ENCODE measurements at regions of chr17 and their contacts with region 1.

Region 1: GRCh38 chr17:76753061-76753961 is 15.4 kb downstream of the MFSD11 start:
- DNase-seq: peak; percentile 43
- ATAC-seq: peak; percentile 90
- H3K4me3 Mint-ChIP-seq: peak overlapping the region; percentile 82
- H3K27ac Mint-ChIP-seq: peak overlapping the region; percentile 97
- H3K4me1 Mint-ChIP-seq: peaks cover 23% of the 10 kb centered on the region
- H3K27me3 Mint-ChIP-seq: no peaks in the 10 kb centered on the region

Region 2: GRCh38 chr17:76612977-76613851 is 140.1 kb before region 1 on chr17:
- CTCF ChIA-PET with region 1: no interaction called
- POLR2A ChIA-PET with region 1: interaction called, 13 read pairs
- intact Hi-C with region 1: no loop called
- DNase-seq: no peak
- ATAC-seq: no peak
- H3K4me3 Mint-ChIP-seq: no peak overlapping the region
- H3K27ac Mint-ChIP-seq: no peak overlapping the region
- H3K4me1 Mint-ChIP-seq: no peaks in the 10 kb centered on the region
- H3K27me3 Mint-ChIP-seq: no peaks in the 10 kb centered on the region

Region 3: GRCh38 chr17:76714822-76715495 is 38.4 kb before region 1 on chr17:
- CTCF ChIA-PET with region 1: interaction called, 6 read pairs
- POLR2A ChIA-PET with region 1: interaction called, 4 read pairs
- intact Hi-C with region 1: loop called in 1 of 2 experiments (anchors 2 kb)
- DNase-seq: peak; percentile 87
- ATAC-seq: no peak
- H3K4me3 Mint-ChIP-seq: no peak overlapping the region
- H3K27ac Mint-ChIP-seq: peak overlapping the region; percentile 68
- H3K4me1 Mint-ChIP-seq: peaks cover 38% of the 10 kb centered on the region
- H3K27me3 Mint-ChIP-seq: no peaks in the 10 kb centered on the region

Region 4: GRCh38 chr17:76726231-76726775 is 27.0 kb before region 1 on chr17 and contains the start of gene JMJD6:
- CTCF ChIA-PET with region 1: interaction called, 4 read pairs
- POLR2A ChIA-PET with region 1: interaction called, 7 read pairs
- intact Hi-C with region 1: loop called in 1 of 2 experiments (anchors 1 kb)
- DNase-seq: peak; percentile 97
- ATAC-seq: peak; percentile 87
- H3K4me3 Mint-ChIP-seq: peak within 1 kb of the TSS; percentile 97
- H3K27ac Mint-ChIP-seq: peak within 1 kb of the TSS; percentile 98
- H3K4me1 Mint-ChIP-seq: peaks cover 54% of the 10 kb centered on the region
- H3K27me3 Mint-ChIP-seq: no peaks in the 10 kb centered on the region
- total RNA-seq, gene JMJD6: 51.3 to 65.5 TPM

Region 5: DNA sequence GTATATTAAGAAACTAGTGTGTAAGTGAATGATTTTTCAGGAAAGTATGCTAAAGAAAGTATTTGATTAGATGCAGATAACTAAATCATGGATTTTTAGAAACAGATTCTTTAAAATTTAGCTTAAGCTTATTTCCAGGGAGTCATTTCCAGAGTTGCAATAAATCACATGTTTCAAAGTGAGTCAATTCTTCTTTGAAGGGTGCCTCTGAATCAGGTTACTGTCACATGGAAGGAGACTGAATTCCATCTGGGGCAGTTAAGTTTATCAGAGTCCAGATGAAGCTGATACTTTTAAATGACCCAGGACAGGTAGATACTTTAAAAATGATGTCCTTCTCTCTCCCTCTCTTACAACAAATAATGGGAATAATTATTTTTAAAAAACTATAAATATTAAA is 10.4 kb before region 1 on chr17:
- CTCF ChIA-PET with region 1: interaction called, 5 read pairs
- POLR2A ChIA-PET with region 1: interaction called, 5 read pairs
- intact Hi-C with region 1: loop called (anchors 1 to 2 kb)
- DNase-seq: no peak
- ATAC-seq: peak; percentile 65
- H3K4me3 Mint-ChIP-seq: no peak overlapping the region
- H3K27ac Mint-ChIP-seq: no peak overlapping the region
- H3K4me1 Mint-ChIP-seq: peaks cover 32% of the 10 kb centered on the region
- H3K27me3 Mint-ChIP-seq: no peaks in the 10 kb centered on the region

Region 6: DNA sequence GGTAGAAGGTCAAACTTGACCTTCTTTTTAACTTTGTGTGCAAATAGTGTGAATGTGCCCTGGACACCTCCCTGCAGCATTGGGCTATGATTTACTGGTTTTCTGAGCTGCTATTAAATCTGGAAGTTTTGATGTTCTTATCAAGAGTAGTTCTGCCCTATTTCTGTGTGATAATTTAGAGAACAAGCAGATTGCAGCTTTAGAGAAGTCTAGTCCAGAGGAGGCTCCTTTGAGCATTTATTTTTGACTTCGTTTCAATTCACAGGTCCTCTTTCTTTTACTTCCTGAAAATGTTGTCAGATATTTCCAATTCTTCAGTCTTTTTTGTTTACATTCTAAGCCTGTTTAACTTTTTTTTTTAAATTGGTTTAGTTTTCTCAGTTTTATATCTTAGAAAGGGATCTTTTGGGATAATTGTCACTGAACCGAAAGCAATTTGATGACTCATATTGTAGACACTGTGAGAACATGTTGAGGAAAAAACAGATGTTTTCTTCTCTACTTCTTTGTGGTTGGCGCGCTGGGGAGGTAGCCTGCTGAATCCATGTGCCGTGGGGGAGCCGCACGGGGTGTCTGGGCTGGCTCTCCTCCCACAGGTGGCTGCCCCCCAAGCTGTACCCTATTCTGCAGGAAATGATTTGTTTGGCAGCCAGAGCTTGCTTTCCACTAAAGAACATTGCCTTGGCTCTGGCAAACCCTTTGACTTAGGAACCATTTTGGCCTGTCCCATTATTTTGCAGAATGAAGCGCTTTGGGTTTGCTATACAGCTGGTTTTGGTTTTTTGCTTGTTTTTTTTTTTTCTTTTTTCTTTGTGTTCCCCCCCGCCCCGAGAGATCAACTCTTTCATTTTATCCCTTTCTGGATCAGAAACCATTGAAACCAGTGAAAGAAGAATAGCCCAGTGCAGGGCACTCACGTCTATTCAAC is 38.0 kb after region 1 on chr17:
- CTCF ChIA-PET with region 1: no interaction called
- POLR2A ChIA-PET with region 1: no interaction called
- intact Hi-C with region 1: loop called in 1 of 2 experiments (anchors 1 kb)
- DNase-seq: peak; percentile 73
- ATAC-seq: peak; percentile 89
- H3K4me3 Mint-ChIP-seq: peak overlapping the region; percentile 12
- H3K27ac Mint-ChIP-seq: no peak overlapping the region
- H3K4me1 Mint-ChIP-seq: peaks cover 10% of the 10 kb centered on the region
- H3K27me3 Mint-ChIP-seq: no peaks in the 10 kb centered on the region

Region 7: GRCh38 chr17:76940738-76941350 is 187.5 kb after region 1 on chr17:
- CTCF ChIA-PET with region 1: no interaction called
- POLR2A ChIA-PET with region 1: no interaction called
- intact Hi-C with region 1: no loop called
- DNase-seq: peak; percentile 35
- ATAC-seq: no peak
- H3K4me3 Mint-ChIP-seq: no peak overlapping the region
- H3K27ac Mint-ChIP-seq: no peak overlapping the region
- H3K4me1 Mint-ChIP-seq: no peaks in the 10 kb centered on the region
- H3K27me3 Mint-ChIP-seq: no peaks in the 10 kb centered on the region

Region 8: GRCh38 chr17:77088455-77089123 is 335.3 kb after region 1 on chr17:
- CTCF ChIA-PET with region 1: no interaction called
- POLR2A ChIA-PET with region 1: no interaction called
- intact Hi-C with region 1: loop called in 1 of 2 experiments (anchors 1 kb)
- DNase-seq: peak; percentile 89
- ATAC-seq: peak; percentile 83
- H3K4me3 Mint-ChIP-seq: peak overlapping the region; percentile 98
- H3K27ac Mint-ChIP-seq: peak overlapping the region; percentile 97
- H3K4me1 Mint-ChIP-seq: peaks cover 50% of the 10 kb centered on the region
- H3K27me3 Mint-ChIP-seq: no peaks in the 10 kb centered on the region

Measured in activated CD4-positive, alpha-beta T cell treated with anti-CD3 and anti-CD28 coated beads for 36 hours (primary cell).